Head of caudate nucleus (tissue), 42 donors: ENCODE measurements at regions of chr2 and their contacts with region 1.

Region 1: GRCh38 chr2:201780674-201781581 is at the start of gene ALS2:
- DNase-seq: peak; percentile 93 to 99 (median 97)

Region 2: DNA sequence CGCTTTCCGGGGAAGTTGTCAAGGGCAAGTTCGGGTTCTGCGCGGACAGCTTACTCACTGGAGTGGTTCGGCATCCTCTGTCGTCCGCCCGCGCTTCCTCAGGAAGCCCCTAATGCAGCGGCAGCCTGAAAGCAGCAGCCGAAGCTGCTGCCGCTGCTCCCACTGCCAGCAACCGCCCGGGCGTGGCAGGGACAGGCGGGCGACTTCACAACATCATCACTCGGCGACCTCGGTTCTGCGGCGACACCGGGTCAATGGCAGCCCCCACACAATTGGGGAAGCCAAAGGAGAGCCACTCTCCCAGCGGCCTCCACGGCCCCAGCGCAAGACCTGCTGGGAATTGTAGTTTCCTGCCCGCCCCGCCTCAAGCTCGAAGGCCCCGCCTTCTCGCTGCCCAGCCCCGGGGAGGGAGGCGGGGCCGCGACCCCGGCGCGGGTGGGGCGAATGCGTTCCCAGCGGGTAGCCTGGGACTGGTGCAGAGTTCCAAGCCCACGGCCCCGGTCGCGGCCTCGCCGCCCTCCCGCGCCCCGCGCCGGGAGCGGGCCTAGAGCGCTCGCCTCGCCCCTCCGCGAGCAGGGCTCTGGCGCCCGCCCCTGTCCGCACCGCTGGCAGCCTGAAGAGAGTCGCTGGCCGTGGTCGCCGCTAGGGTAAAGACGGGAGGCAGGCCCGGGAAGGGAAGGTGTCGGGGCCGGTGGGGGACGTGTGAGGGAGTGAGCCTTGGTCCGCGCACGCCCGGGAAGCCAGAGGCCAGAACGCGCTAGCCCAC is 329.5 kb before region 1 on chr2 and contains the starts of genes STRADB and TRAK2:
- intact Hi-C with region 1: loop called (anchors 5 kb)
- DNase-seq: peak; percentile 95 to 99 (median 98)

Region 3: DNA sequence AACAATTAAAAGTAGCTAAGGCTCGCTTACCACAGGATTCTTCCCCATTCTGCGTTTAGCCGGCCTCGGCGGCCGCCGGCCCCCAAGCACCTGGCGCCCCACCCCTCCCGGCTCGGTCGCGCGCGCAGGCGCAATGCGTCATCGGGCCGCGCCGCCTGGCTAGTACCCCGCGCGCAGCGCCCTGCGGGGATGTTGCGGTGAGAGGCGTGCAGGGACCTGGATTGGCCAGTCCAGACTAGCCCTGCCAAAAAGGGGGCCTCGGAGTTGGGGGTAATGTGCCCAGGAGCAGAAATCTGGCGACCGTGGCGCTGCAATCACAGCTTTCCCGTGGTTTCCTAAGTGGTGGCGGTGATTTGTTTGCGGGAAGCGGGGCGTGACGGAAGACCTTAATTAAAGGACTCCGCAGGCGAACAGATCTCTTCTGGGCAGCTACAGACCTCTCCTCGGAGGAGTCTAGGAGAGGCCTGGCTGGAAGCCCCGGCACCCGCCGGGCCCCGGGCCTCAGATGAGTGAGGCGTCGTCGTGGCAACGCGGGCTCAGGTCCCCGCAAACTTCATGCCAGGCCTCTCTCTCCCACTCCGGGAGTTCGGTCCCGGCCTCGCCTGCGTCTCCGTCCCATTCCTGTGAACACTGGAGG is 138.2 kb before region 1 on chr2:
- intact Hi-C with region 1: loop called (anchors 10 kb)
- DNase-seq: peak; percentile 37 to 92 (median 84)